Spleen (tissue), 13 donors: ENCODE measurements at regions of chr7 and their contacts with region 1.

Region 1: GRCh38 chr7:144738708-144739314 is 97.0 kb downstream of the TPK1 start:
- DNase-seq: no peak
- H3K4me3 ChIP-seq: no peak overlapping the region
- H3K27ac ChIP-seq: no peak overlapping the region
- H3K4me1 ChIP-seq: no peaks in the 10 kb centered on the region
- H3K27me3 ChIP-seq: no peaks in the 10 kb centered on the region
- CTCF ChIP-seq: peak; percentile 33 to 74 (median 70)
- POLR2A ChIP-seq: no peak

Region 2: GRCh38 chr7:144786522-144786921 is 47.7 kb after region 1 on chr7:
- intact Hi-C with region 1: no loop called
- DNase-seq: no peak
- H3K4me3 ChIP-seq: no peak overlapping the region
- H3K27ac ChIP-seq: no peak overlapping the region
- H3K4me1 ChIP-seq: peaks cover 0 to 4% (median 0%) of the 10 kb centered on the region in 6 donors
- H3K27me3 ChIP-seq: no peaks in the 10 kb centered on the region
- CTCF ChIP-seq: peak in 1 of 11 experiments; percentile 22
- POLR2A ChIP-seq: no peak

Region 3: GRCh38 chr7:145020454-145020853 is 281.6 kb after region 1 on chr7:
- intact Hi-C with region 1: loop called (anchors 10 kb)
- DNase-seq: no peak
- H3K4me3 ChIP-seq: no peak overlapping the region
- H3K27ac ChIP-seq: no peak overlapping the region
- H3K4me1 ChIP-seq: no peaks in the 10 kb centered on the region
- H3K27me3 ChIP-seq: no peaks in the 10 kb centered on the region
- CTCF ChIP-seq: no peak
- POLR2A ChIP-seq: no peak